ENCODE measurements at regions of chr16 and their contacts with region 1.

Region 1: GRCh38 chr16:10181196-10182162 is 749 bp downstream of the GRIN2A start:
- DNase-seq: peak; percentile 75
- H3K4me3 ChIP-seq: peak overlapping the region in 3 of 4 donors; percentile 24 to 40 (median 33)
- H3K27ac ChIP-seq: no peak overlapping the region
- H3K4me1 ChIP-seq: peaks cover 0 to 32% (median 29%) of the 10 kb centered on the region in 4 donors
- H3K27me3 ChIP-seq: peaks cover 24 to 76% (median 32%) of the 10 kb centered on the region in 3 donors
- CTCF ChIP-seq: peak; percentile 69 to 95 (median 78)
- EP300 ChIP-seq: no peak
- POLR2A ChIP-seq: no peak

Region 2: GRCh38 chr16:9134739-9135138 is 1046.7 kb before region 1 on chr16:
- intact Hi-C with region 1: loop called (anchors 5 kb)
- DNase-seq: peak; percentile 65
- H3K4me3 ChIP-seq: no peak overlapping the region
- H3K27ac ChIP-seq: no peak overlapping the region
- H3K4me1 ChIP-seq: peaks cover 0 to 9% (median 6%) of the 10 kb centered on the region in 4 donors
- H3K27me3 ChIP-seq: no peaks in the 10 kb centered on the region
- CTCF ChIP-seq: peak in 2 of 4 experiments; percentile 25 to 42
- EP300 ChIP-seq: no peak
- POLR2A ChIP-seq: no peak

Region 3: GRCh38 chr16:9258423-9259051 is 922.9 kb before region 1 on chr16:
- intact Hi-C with region 1: loop called (anchors 2 kb)
- DNase-seq: no peak
- H3K4me3 ChIP-seq: no peak overlapping the region
- H3K27ac ChIP-seq: no peak overlapping the region
- H3K4me1 ChIP-seq: no peaks in the 10 kb centered on the region
- H3K27me3 ChIP-seq: peaks cover 0 to 5% (median 0%) of the 10 kb centered on the region in 3 donors
- CTCF ChIP-seq: peak in 3 of 4 experiments; percentile 42 to 47 (median 44)
- EP300 ChIP-seq: no peak
- POLR2A ChIP-seq: no peak

Region 4: GRCh38 chr16:9518051-9518450 is 663.4 kb before region 1 on chr16:
- intact Hi-C with region 1: loop called (anchors 5 kb)
- DNase-seq: peak; percentile 82
- H3K4me3 ChIP-seq: no peak overlapping the region
- H3K27ac ChIP-seq: peak overlapping the region in 3 of 4 donors; percentile 37 to 48 (median 48)
- H3K4me1 ChIP-seq: peaks cover 2 to 22% (median 19%) of the 10 kb centered on the region in 4 donors
- H3K27me3 ChIP-seq: no peaks in the 10 kb centered on the region
- CTCF ChIP-seq: no peak
- EP300 ChIP-seq: peak; percentile 7 to 65 (median 37)
- POLR2A ChIP-seq: no peak

Region 5: GRCh38 chr16:9763505-9763904 is 418.0 kb before region 1 on chr16:
- intact Hi-C with region 1: no loop called
- DNase-seq: no peak
- H3K4me3 ChIP-seq: no peak overlapping the region
- H3K27ac ChIP-seq: no peak overlapping the region
- H3K4me1 ChIP-seq: no peaks in the 10 kb centered on the region
- H3K27me3 ChIP-seq: no peaks in the 10 kb centered on the region
- CTCF ChIP-seq: no peak
- EP300 ChIP-seq: no peak
- POLR2A ChIP-seq: no peak

Region 6: DNA sequence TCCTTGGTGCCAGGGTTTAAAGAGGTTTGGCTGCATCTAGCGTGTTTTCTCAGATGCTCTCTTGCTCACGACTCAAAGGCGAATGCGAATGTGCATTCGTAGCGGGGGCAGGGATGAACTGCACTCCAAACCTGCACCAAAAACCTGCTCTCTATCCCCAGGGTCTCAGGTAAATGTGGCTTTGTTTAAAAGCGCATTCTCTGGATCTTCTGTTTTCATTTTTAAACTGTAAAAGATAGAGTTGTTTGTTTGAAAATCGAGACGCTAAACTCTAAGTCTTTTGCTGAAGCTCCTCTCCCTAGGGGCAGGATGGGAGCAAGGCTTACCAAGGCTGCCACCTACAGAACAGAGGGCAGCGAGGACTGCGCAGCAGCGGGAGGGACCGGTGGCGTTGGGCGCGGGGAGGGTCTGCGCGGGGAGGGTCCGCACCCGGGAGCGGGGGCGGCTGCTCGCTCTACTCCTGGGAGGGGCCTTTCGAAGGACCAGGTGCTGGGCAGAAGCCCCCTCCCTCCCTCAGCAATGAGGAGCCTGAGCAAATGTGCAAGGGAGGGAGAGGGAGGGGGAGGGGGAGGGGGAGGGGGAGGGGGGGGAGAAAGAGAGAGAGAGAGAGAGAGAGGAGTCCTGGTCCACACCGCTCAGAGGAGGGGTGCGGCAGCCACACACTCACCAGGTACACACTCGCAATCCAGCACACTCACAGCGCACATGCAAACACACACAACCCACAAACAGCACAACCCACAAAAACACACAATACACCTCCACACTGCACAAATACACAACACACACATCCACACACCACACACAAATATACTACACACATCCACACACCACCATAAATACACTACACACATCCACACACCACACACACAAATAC is 142.0 kb before region 1 on chr16:
- intact Hi-C with region 1: loop called (anchors 5 kb)
- DNase-seq: no peak
- H3K4me3 ChIP-seq: peak overlapping the region in 3 of 4 donors; percentile 25 to 40 (median 28)
- H3K27ac ChIP-seq: peak overlapping the region in 1 of 4 donors; percentile 47
- H3K4me1 ChIP-seq: peaks cover 0 to 10% (median 7%) of the 10 kb centered on the region in 4 donors
- H3K27me3 ChIP-seq: no peaks in the 10 kb centered on the region
- CTCF ChIP-seq: peak; percentile 10 to 43 (median 22)
- EP300 ChIP-seq: no peak
- POLR2A ChIP-seq: no peak